CD8-positive, alpha-beta memory T cell (primary cell): ENCODE measurements at regions of chr18 and their contacts with region 1.

Region 1: GRCh38 chr18:80157708-80158343 is 48.8 kb downstream of the ADNP2 start:
- DNase-seq: peak; percentile 39 to 82 (median 57)
- H3K4me3 ChIP-seq: no peak overlapping the region
- H3K4me3 Mint-ChIP-seq: no peak overlapping the region
- H3K27ac ChIP-seq: no peak overlapping the region
- H3K27ac Mint-ChIP-seq: no peak overlapping the region
- H3K4me1 ChIP-seq: no peaks in the 10 kb centered on the region
- H3K4me1 Mint-ChIP-seq: peaks cover 2 to 7% (median 7%) of the 10 kb centered on the region in 3 donors
- H3K27me3 ChIP-seq: no peaks in the 10 kb centered on the region
- H3K27me3 Mint-ChIP-seq: peaks cover 7 to 10% of the 10 kb centered on the region in 2 donors

Region 2: DNA sequence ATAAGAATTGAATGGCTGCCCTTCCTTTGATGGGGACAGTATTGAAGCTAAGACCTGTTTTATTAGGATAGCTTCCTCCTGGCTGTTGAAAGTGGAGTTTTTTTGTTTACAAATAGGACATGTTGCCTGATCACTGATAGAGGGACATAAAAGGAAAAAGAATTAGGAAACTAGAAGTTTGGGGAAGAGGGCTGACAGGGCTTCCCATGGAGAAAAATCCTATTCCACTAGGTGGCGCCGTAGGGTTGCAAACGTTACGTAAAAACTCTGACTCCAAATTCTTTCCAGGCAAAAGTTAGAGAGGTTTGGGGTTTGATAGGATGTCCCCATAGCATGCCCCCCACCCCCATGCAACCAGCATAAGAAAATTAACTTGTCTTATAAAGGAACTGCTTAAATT is 134.7 kb before region 1 on chr18:
- CTCF ChIA-PET with region 1: no interaction called
- POLR2A ChIA-PET with region 1: no interaction called
- DNase-seq: no peak
- H3K4me3 ChIP-seq: no peak overlapping the region
- H3K4me3 Mint-ChIP-seq: no peak overlapping the region
- H3K27ac ChIP-seq: no peak overlapping the region
- H3K27ac Mint-ChIP-seq: no peak overlapping the region
- H3K4me1 ChIP-seq: no peaks in the 10 kb centered on the region
- H3K4me1 Mint-ChIP-seq: no peaks in the 10 kb centered on the region
- H3K27me3 ChIP-seq: no peaks in the 10 kb centered on the region
- H3K27me3 Mint-ChIP-seq: peaks cover 0 to 1% of the 10 kb centered on the region in 2 donors

Region 3: DNA sequence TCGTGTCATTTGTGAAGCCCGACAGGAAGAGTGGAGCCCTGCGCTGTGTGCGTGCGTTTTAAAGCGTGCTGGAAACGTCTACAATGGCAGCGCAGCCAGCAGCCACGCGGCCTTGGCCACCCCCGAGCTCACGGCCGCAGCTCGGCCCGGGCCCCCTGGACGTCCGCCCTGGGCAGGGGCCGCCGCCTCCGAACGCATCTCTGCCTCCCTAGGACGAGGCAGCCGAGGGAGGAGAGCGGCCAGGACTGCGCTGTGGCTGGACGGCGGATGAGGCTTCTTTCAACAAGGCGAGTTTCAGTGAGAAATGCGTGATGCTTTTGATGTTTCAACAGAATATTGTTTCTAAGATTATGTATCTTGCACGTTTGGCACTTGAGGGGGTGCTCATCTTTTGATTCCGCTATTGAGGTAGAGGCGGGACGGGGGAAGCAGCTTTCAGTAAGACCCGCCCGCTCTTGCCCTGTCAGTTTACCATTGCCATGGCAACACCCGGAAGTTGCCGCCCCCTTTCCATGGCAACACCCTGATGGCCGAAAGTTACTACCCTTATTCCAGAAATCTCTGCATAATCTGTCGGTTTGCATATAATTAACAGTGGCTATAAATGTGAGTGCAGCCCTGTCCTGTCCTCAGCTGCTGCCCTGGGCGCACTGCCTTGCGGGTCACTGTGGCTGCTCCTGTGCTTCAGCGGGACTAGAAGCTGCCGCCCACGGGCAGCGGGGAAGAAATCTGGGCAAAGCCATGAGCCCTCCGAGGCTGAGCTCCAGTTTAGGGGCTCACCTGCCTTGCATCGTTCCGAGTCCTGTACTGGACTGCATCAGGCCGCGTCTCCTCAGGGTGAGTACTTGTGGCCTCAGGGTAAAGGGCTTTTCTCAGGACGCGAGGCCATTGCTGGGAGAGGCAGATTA is 10.2 kb before region 1 on chr18:
- CTCF ChIA-PET with region 1: interaction called, 17 read pairs
- POLR2A ChIA-PET with region 1: no interaction called
- DNase-seq: peak; percentile 52 to 84 (median 62)
- H3K4me3 ChIP-seq: peak overlapping the region; percentile 68
- H3K4me3 Mint-ChIP-seq: peak overlapping the region; percentile 69 to 87 (median 82)
- H3K27ac ChIP-seq: no peak overlapping the region
- H3K27ac Mint-ChIP-seq: peak overlapping the region in 5 of 8 donors; percentile 7 to 83 (median 52)
- H3K4me1 ChIP-seq: no peaks in the 10 kb centered on the region
- H3K4me1 Mint-ChIP-seq: peaks cover 10 to 25% (median 17%) of the 10 kb centered on the region in 3 donors
- H3K27me3 ChIP-seq: no peaks in the 10 kb centered on the region
- H3K27me3 Mint-ChIP-seq: peaks cover 4 to 21% of the 10 kb centered on the region in 2 donors

Region 4: DNA sequence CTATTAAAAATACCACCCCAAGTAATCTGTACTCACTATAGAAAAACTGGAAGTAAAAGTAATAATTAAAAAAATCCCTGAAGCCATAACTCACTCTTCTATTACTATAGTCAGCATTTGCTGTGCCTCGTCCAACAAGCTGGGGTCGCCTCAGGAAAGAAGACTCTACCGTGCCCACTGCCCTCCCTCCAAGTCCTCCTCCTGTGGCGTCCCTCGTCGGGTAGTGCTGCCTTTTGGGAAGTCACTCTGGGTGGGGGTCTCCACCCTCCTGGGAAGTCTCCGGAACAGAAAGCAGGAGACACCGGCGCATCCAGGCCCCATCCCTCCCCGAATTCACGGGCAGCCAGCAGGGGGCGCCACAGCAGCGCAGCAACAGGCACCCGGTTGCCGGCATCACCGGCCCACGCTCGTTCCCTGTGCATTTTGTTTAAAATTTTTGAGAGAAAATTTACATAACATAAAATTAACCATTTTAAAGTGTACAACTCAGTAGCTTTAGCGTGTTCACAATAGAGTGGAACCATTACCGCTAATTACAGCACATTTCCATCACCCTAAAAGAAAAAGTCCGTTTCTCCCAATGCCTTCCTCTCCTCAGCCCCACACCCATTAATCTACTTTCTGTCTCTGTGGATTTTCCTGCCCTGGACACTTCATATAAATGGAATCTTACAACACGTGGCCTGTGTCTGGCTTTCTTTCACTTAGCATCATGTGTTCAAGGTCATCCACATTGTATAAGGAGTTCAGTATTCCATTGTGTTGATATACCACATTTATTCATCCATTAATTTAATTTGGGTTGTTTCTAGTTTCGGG is 13.4 kb after region 1 on chr18:
- CTCF ChIA-PET with region 1: interaction called, 13 read pairs
- POLR2A ChIA-PET with region 1: no interaction called
- DNase-seq: peak; percentile 20 to 72 (median 32)
- H3K4me3 ChIP-seq: no peak overlapping the region
- H3K4me3 Mint-ChIP-seq: peak overlapping the region in 5 of 7 donors; percentile 1 to 80 (median 25)
- H3K27ac ChIP-seq: no peak overlapping the region
- H3K27ac Mint-ChIP-seq: peak overlapping the region in 7 of 8 donors; percentile 5 to 95 (median 66)
- H3K4me1 ChIP-seq: peaks cover 37% of the 10 kb centered on the region
- H3K4me1 Mint-ChIP-seq: peaks cover 20 to 58% (median 32%) of the 10 kb centered on the region in 3 donors
- H3K27me3 ChIP-seq: no peaks in the 10 kb centered on the region
- H3K27me3 Mint-ChIP-seq: peaks cover 20 to 27% of the 10 kb centered on the region in 2 donors

Region 5: GRCh38 chr18:80253871-80254492 is 96.2 kb after region 1 on chr18:
- CTCF ChIA-PET with region 1: interaction called, 40 read pairs
- POLR2A ChIA-PET with region 1: no interaction called
- DNase-seq: peak in 2 of 5 donors; percentile 23 to 59
- H3K4me3 ChIP-seq: no peak overlapping the region
- H3K4me3 Mint-ChIP-seq: no peak overlapping the region
- H3K27ac ChIP-seq: no peak overlapping the region
- H3K27ac Mint-ChIP-seq: peak overlapping the region in 1 of 8 donors; percentile 42
- H3K4me1 ChIP-seq: no peaks in the 10 kb centered on the region
- H3K4me1 Mint-ChIP-seq: no peaks in the 10 kb centered on the region
- H3K27me3 ChIP-seq: no peaks in the 10 kb centered on the region
- H3K27me3 Mint-ChIP-seq: peaks cover 3 to 11% of the 10 kb centered on the region in 2 donors